ENCODE measurements at regions of chr10 and their contacts with region 1.

Region 1: GRCh38 chr10:89369156-89370105 is 8.4 kb upstream of the IFIT1B start:
- DNase-seq: no peak
- ATAC-seq: no peak
- H3K4me3 ChIP-seq: no peak overlapping the region
- H3K27ac ChIP-seq: no peak overlapping the region
- H3K4me1 ChIP-seq: peaks cover 30% of the 10 kb centered on the region
- H3K27me3 ChIP-seq: no peaks in the 10 kb centered on the region
- CTCF ChIP-seq: peak; percentile 49
- EP300 ChIP-seq: no peak
- POLR2A ChIP-seq: no peak
- RAD21 ChIP-seq: peak; percentile 26; the same call in 1 of the 2 replicates

Region 2: DNA sequence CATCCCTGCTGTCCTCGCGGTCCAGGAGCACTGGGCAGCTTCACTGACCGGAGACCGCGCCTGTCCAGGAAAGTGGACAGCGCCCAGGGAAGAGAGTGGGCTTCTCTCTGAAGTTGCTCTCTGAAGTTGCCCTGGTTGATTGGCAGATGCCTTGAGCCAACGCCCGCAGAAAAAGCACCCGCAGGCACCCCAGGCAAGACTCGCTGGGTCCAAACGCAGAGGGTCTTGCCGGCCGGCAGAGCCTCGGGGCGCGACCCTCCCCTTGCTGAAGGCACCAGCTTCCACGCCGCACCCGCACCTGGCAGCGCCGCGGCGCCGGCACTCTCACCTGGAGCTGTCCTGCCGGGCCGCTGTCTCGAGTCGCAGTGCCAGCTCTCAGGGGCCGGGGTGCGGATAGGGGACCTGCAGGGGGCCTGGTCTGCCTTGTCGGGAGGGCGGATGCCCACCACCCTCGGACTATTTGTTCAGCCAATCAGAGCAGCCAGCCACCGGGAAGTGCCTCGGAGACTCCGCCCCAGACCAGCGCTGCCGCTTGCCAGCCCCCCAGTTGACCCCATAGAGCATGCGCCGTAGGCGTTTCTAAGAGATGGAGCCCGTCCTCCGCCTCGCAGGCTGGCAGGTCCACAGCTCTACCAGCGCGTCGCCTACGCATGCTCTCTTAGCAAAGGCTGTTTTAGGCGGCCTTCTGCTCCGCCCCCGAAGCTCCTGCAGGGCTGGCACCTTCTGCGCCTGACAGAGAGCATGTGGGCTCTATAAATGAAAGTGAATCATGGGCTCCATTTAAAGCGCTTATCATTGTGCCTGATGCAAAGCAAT is 117.8 kb before region 1 on chr10 and contains the start of gene LIPA:
- CTCF ChIA-PET with region 1: no interaction called
- POLR2A ChIA-PET with region 1: interaction called, 4 read pairs
- in situ Hi-C with region 1: loop called (anchors 5 kb)
- intact Hi-C with region 1: no loop called
- DNase-seq: peak; percentile 94
- ATAC-seq: peak; percentile 96
- H3K4me3 ChIP-seq: peak within 1 kb of the TSS; percentile 81 to 97 (median 89)
- H3K27ac ChIP-seq: peak within 1 kb of the TSS; percentile 71
- H3K4me1 ChIP-seq: peaks cover 18% of the 10 kb centered on the region
- H3K27me3 ChIP-seq: no peaks in the 10 kb centered on the region; a peak in 1 of 5 replicates
- CTCF ChIP-seq: peak; percentile 31
- EP300 ChIP-seq: no peak
- POLR2A ChIP-seq: peak; percentile 80 to 89
- RAD21 ChIP-seq: peak; percentile 45; the same call in 1 of the 2 replicates
- total RNA-seq, gene LIPA: 50.6 and 79.5 TPM in 2 replicates

Region 3: GRCh38 chr10:89296220-89296648 is 73.2 kb before region 1 on chr10:
- CTCF ChIA-PET with region 1: interaction called, 5 read pairs
- POLR2A ChIA-PET with region 1: no interaction called
- in situ Hi-C with region 1: no loop called
- intact Hi-C with region 1: loop called (anchors 1 kb)
- DNase-seq: no peak
- ATAC-seq: no peak
- H3K4me3 ChIP-seq: no peak overlapping the region
- H3K27ac ChIP-seq: no peak overlapping the region
- H3K4me1 ChIP-seq: peaks cover 3% of the 10 kb centered on the region
- H3K27me3 ChIP-seq: no peaks in the 10 kb centered on the region
- CTCF ChIP-seq: no peak
- EP300 ChIP-seq: no peak
- POLR2A ChIP-seq: no peak
- RAD21 ChIP-seq: no peak

Region 4: DNA sequence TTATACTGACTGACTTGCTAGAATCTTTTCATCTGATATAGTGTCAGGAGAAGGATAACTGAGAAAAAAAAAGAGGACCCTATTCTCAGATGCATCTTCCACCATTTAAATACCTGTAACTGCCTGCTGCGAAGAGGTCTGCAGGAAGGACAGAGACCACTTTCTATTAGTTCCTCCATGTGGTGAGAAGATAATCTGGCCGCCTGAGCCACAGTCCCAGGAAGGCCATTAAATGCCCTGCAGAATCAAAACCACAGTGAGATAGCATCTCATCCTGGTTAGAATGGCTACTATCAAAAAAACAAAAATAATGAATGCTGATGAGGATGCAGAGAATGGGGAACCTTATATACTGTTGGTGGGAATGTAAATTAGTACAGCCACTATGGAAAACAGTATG is 11.5 kb before region 1 on chr10:
- CTCF ChIA-PET with region 1: no interaction called
- POLR2A ChIA-PET with region 1: interaction called, 6 read pairs
- in situ Hi-C with region 1: no loop called
- intact Hi-C with region 1: loop called (anchors 2 kb)
- DNase-seq: no peak
- ATAC-seq: no peak
- H3K4me3 ChIP-seq: no peak overlapping the region
- H3K27ac ChIP-seq: no peak overlapping the region
- H3K4me1 ChIP-seq: peaks cover 5% of the 10 kb centered on the region
- H3K27me3 ChIP-seq: no peaks in the 10 kb centered on the region
- CTCF ChIP-seq: no peak
- EP300 ChIP-seq: no peak
- POLR2A ChIP-seq: no peak
- RAD21 ChIP-seq: no peak

Region 5: GRCh38 chr10:89391917-89392756 is 22.7 kb after region 1 on chr10 and contains the start of gene IFIT1:
- CTCF ChIA-PET with region 1: no interaction called
- POLR2A ChIA-PET with region 1: interaction called, 5 read pairs
- in situ Hi-C with region 1: no loop called
- intact Hi-C with region 1: loop called (anchors 2 kb)
- DNase-seq: peak; percentile 82
- ATAC-seq: peak; percentile 95
- H3K4me3 ChIP-seq: peak within 1 kb of the TSS; percentile 68 to 88 (median 78)
- H3K27ac ChIP-seq: peak within 1 kb of the TSS; percentile 66
- H3K4me1 ChIP-seq: peaks cover 10% of the 10 kb centered on the region
- H3K27me3 ChIP-seq: no peaks in the 10 kb centered on the region
- CTCF ChIP-seq: no peak
- EP300 ChIP-seq: no peak
- POLR2A ChIP-seq: 0 out of 4 replicates have a peak, but pooled peaks of 1 of the 2 experiments have one; percentile 32
- RAD21 ChIP-seq: no peak
- total RNA-seq, gene IFIT1: 5.5 and 7.5 TPM in 2 replicates

Measured in HepG2 (cell line).